Sigmoid colon (tissue), 7 donors: ENCODE measurements at regions of chr5 and their contacts with region 1.

Region 1: DNA sequence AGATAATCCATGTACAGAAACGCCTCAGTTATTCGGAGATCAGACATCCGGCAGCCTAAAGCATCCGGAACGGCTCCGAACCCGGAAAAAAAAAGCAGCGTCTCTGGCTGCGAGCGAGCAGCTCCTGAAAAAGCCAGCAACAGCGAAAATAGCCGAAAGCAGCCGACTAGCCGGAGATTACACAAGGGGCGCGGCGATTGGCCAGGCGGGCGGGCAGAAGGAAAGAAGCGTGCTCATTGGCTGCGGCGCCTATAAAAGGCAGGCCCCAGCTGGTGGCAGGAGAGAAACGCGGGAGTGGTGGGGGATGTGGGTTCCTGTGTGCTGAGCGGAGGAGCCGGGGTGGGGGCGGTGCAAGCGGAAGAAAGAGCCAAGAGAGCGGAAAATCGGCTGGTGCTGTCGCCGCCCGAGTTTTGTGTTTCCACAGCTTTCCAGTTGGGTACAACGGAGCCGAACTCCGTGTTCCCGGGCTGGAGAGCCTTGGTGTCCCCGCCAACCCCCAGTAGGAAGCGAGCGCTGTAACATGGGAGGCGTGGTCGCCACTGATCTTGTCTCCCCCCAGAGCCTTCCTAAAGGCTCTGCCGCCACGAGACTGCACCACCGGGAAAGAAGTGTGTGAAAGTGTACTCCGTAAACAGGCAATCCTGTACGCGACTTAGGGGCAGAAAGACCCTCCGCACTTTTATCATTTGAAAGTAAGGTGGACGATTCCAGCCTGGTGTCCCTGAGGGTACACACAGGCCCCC is at the start of gene ARL15:
- DNase-seq: peak; percentile 99
- H3K4me3 ChIP-seq: peak within 1 kb of the TSS; percentile 73 to 95 (median 84)
- H3K27ac ChIP-seq: peak within 1 kb of the TSS; percentile 83 to 91 (median 88)
- H3K4me1 ChIP-seq: peaks cover 0 to 22% (median 13%) of the 10 kb centered on the region in 4 donors
- H3K27me3 ChIP-seq: no peaks in the 10 kb centered on the region
- CTCF ChIP-seq: no peak
- EP300 ChIP-seq: no peak
- POLR2A ChIP-seq: peak; percentile 98 to 99
- total RNA-seq, gene ARL15: 13.6 to 18.2 (median 15.4) TPM

Region 2: DNA sequence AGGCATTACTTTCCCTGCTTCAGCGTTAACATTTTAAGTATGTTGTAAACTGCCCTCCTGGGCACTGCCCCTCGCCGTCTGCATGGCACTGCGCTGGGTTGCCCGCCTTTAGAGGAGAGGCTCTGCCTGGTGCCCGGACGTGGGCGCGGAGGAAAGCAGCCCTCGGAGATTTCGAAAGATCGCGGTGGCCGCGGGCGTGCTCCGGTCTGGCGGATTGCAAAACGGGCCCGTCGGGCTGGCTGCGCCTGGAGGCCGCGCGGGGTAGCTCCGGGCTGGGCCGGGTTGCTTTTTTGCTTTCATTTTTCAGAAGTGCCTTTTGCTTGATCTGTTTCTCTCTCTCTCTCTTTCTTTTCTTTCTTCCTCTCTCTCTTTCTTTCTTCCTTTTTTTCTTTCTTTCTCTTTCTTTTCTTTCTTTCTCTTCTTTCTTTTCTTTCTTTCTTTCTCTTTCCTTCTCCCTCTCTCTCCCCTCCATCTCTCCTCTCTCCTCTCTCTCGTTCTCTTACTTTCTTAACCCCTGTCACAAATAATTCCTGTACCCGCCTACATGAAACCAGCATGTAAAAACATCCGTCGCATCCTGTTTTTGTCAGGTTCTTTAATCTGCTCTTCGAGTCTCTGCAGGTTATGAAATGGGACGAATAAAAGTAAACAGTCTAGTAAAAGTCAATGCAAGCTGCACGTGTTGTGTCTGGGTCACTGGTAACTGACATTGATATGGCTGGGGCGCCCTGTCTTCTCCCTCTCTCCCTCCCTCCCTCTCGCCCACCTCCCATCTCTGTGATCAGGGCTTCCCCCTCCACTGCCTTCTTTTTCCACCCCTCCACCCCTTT is 828.5 kb before region 1 on chr5:
- intact Hi-C with region 1: loop called (anchors 10 kb)
- DNase-seq: peak; percentile 89
- H3K4me3 ChIP-seq: peak overlapping the region; percentile 34 to 81 (median 62)
- H3K27ac ChIP-seq: peak overlapping the region; percentile 69 to 84 (median 72)
- H3K4me1 ChIP-seq: peaks cover 0 to 30% (median 22%) of the 10 kb centered on the region in 4 donors
- H3K27me3 ChIP-seq: no peaks in the 10 kb centered on the region
- CTCF ChIP-seq: peak in 3 of 4 experiments; percentile 21 to 50 (median 32)
- EP300 ChIP-seq: no peak
- POLR2A ChIP-seq: no peak

Region 3: GRCh38 chr5:53560506-53561191 is 750.0 kb before region 1 on chr5 and contains the start of gene NDUFS4:
- intact Hi-C with region 1: loop called (anchors 2 kb)
- DNase-seq: peak; percentile 90
- H3K4me3 ChIP-seq: peak within 1 kb of the TSS; percentile 73 to 86 (median 83)
- H3K27ac ChIP-seq: peak within 1 kb of the TSS; percentile 84 to 89 (median 87)
- H3K4me1 ChIP-seq: peaks cover 0 to 40% (median 28%) of the 10 kb centered on the region in 4 donors
- H3K27me3 ChIP-seq: no peaks in the 10 kb centered on the region
- CTCF ChIP-seq: no peak
- EP300 ChIP-seq: no peak
- POLR2A ChIP-seq: peak; percentile 21 to 59
- total RNA-seq, gene NDUFS4: 106 to 179 (median 129) TPM

Region 4: GRCh38 chr5:54234304-54234933 is 76.2 kb before region 1 on chr5:
- intact Hi-C with region 1: loop called (anchors 5 kb)
- DNase-seq: no peak
- H3K4me3 ChIP-seq: no peak overlapping the region
- H3K27ac ChIP-seq: no peak overlapping the region
- H3K4me1 ChIP-seq: peaks cover 0 to 16% (median 4%) of the 10 kb centered on the region in 4 donors
- H3K27me3 ChIP-seq: no peaks in the 10 kb centered on the region
- CTCF ChIP-seq: peak in 3 of 4 experiments; percentile 29 to 47 (median 32)
- EP300 ChIP-seq: no peak
- POLR2A ChIP-seq: no peak

Region 5: GRCh38 chr5:54249210-54250028 is 61.2 kb before region 1 on chr5:
- intact Hi-C with region 1: loop called (anchors 5 kb)
- DNase-seq: no peak
- H3K4me3 ChIP-seq: no peak overlapping the region
- H3K27ac ChIP-seq: no peak overlapping the region
- H3K4me1 ChIP-seq: peaks cover 0 to 6% (median 0%) of the 10 kb centered on the region in 4 donors
- H3K27me3 ChIP-seq: no peaks in the 10 kb centered on the region
- CTCF ChIP-seq: no peak
- EP300 ChIP-seq: no peak
- POLR2A ChIP-seq: no peak

Region 6: DNA sequence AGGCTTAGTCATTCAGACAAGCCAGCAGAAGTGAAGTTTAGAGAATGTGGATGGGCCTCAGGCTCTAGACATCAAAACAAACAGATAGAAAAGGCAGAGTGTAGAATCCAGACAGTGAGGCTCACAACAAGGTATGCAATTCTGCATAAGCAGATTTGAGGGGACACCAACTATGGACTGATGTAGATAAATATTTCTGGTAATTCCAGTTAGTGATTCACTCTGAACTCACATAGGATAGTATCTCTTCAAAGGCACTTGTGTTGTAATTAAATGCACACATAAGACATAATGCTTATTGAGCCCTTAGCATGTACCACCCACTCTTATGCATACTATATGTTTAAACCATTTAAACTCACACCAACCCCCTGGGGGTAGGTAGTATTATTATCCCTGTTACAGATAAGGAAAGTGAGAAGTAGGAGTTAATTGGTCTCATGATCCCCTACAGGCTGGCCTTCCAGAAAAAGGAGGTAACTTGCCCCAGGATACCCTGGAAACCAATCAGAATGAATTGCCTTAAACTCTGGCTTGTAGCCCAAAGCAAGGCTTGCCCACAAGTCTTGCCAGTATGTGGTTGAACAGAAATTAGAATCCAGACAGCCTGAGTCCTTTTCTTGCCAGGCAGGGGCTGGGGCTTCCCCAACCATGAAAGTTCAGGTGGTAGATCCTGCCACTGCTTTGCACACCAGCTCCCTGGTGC is 105.4 kb after region 1 on chr5:
- intact Hi-C with region 1: loop called (anchors 10 kb)
- DNase-seq: no peak
- H3K4me3 ChIP-seq: no peak overlapping the region
- H3K27ac ChIP-seq: no peak overlapping the region
- H3K4me1 ChIP-seq: no peaks in the 10 kb centered on the region
- H3K27me3 ChIP-seq: no peaks in the 10 kb centered on the region
- CTCF ChIP-seq: no peak
- EP300 ChIP-seq: no peak
- POLR2A ChIP-seq: no peak

Region 7: GRCh38 chr5:54867310-54867944 is 556.8 kb after region 1 on chr5:
- intact Hi-C with region 1: loop called (anchors 10 kb)
- DNase-seq: no peak
- H3K4me3 ChIP-seq: peak overlapping the region in 1 of 4 donors; percentile 18
- H3K27ac ChIP-seq: no peak overlapping the region
- H3K4me1 ChIP-seq: peaks cover 0 to 4% (median 0%) of the 10 kb centered on the region in 4 donors
- H3K27me3 ChIP-seq: no peaks in the 10 kb centered on the region
- CTCF ChIP-seq: peak in 3 of 4 experiments; percentile 45 to 62 (median 56)
- EP300 ChIP-seq: no peak
- POLR2A ChIP-seq: no peak